BJ (cell line): ENCODE measurements at regions of chr2 and their contacts with region 1.

Region 1: DNA sequence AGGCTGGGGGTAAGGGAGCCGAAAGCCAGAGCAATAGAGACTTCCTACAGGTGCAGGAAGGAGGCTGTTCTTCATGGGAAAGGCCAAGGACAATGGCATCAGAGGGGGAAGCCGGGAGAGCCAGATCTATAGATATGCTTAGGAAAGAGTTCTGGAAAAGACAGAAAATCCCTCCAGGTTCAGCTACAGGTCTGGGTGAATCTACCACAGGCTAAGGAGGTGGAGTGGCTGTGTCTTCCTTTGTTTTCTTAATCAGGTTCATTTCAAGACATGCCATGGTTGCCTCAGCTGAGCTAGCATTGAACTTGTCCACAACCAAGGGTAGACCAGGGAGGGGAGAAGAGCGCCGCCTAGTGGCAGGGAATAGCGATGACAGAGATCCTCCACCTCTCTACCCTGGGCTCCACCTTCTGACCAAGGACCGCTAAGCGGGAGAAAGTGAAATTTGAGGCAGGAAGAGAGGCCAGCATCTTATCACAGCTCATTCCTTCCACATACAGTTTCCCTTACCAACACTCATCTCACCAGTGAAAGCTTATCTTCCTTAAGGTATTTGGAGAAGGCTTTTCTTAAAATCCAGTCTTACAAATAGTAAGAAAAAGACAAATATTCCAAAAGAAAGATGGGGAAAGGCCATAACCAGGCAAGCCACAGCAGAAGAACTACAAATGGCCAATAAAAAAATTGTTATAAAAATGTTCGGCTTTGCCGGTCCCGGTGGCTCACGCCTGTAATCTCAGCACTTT is 74.2 kb downstream of the VIT start:
- DNase-seq: no peak
- H3K4me3 ChIP-seq: no peak overlapping the region
- H3K27me3 ChIP-seq: no peaks in the 10 kb centered on the region
- CTCF ChIP-seq: peak; percentile 69

Region 2: GRCh38 chr2:36695746-36696415 is 74.8 kb before region 1 on chr2:
- CTCF ChIA-PET with region 1: interaction called, 14 read pairs
- POLR2A ChIA-PET with region 1: no interaction called
- DNase-seq: peak; percentile 37
- H3K4me3 ChIP-seq: peak overlapping the region; percentile 0; the same call in 1 of the 2 replicates
- H3K27me3 ChIP-seq: no peaks in the 10 kb centered on the region
- CTCF ChIP-seq: peak; percentile 73

Region 3: GRCh38 chr2:36753706-36754221 is 17.0 kb before region 1 on chr2:
- CTCF ChIA-PET with region 1: interaction called, 16 read pairs
- POLR2A ChIA-PET with region 1: no interaction called
- DNase-seq: no peak
- H3K4me3 ChIP-seq: no peak overlapping the region
- H3K27me3 ChIP-seq: no peaks in the 10 kb centered on the region
- CTCF ChIP-seq: no peak

Region 4: GRCh38 chr2:36858551-36859365 is 88.0 kb after region 1 on chr2:
- CTCF ChIA-PET with region 1: no interaction called
- POLR2A ChIA-PET with region 1: no interaction called
- DNase-seq: no peak
- H3K4me3 ChIP-seq: no peak overlapping the region
- H3K27me3 ChIP-seq: no peaks in the 10 kb centered on the region
- CTCF ChIP-seq: no peak

Region 5: DNA sequence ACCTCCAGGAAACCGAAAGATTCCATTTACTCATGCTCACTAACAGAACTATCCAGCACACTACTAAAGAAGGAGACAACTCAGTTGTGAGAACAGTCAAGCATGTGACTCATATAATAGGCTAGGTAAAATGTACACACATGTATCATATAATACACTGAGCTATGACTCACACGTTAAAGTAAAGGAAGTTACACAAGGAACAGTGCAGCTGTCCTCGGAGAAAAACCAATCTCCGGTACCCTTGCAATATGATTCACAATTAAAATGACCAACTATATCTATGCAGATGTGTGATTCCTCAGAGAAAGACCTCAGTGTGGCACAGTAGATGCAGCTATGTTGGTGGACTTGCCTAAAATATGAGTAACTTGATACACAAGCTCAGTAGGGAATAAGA is 119.1 kb after region 1 on chr2:
- CTCF ChIA-PET with region 1: no interaction called
- POLR2A ChIA-PET with region 1: no interaction called
- DNase-seq: peak; percentile 74
- H3K4me3 ChIP-seq: no peak overlapping the region
- H3K27me3 ChIP-seq: no peaks in the 10 kb centered on the region
- CTCF ChIP-seq: no peak